HepG2 (cell line): ENCODE measurements at regions of chr15 and their contacts with region 1.

Region 1: DNA sequence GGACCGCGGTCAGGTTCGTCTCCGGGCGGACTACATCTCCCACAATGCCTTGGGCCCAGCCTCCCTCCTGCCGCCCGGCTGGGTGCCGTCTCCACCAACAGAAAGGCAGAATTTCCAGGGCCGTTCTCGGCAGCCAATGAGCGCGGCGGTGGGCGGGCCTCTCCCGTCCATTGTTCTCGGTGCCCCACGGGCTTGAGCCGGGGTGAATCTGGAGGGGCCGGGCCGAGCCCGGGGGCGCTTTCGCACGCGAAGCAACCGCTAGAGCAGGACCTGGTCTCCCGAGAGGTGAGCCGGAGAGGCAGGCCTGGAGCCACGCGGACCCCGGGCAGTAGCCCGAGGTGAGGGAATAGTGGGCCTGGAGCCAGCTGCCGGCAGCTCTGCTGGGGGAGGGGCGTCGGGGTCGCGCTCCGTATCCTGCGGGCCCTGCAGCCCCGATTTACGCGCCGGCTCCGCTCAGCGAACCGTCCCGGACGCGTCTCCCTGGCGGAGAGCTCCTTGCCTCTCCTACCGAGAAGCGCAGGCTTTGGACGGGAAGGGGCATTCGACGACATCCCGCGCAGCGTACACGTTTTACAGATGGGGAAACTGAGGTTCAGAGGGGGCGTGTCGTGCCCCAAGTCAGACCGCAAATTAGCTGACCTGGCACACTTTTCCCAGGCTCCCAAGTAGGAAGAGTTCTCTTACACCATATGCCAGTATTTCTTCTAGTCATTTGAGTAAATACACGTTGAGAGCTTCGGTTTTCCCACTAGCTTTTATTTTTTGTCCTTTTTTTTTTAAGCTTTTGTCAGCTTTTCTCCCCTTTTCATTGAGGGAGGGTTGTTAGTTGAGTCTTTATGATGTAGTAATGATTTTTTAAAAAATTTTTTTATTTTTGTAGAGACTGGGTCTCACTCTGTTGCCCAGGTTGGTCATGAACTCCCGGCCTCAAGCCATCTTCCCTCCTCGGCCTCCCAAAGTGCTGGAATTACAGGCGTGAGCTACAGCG is at the start of gene ZSCAN2:
- DNase-seq: peak; percentile 91
- ATAC-seq: peak; percentile 96
- H3K4me3 ChIP-seq: peak within 1 kb of the TSS; percentile 78 to 98 (median 86)
- H3K27ac ChIP-seq: peak within 1 kb of the TSS; percentile 86
- H3K4me1 ChIP-seq: peaks cover 60% of the 10 kb centered on the region
- H3K27me3 ChIP-seq: no peaks in the 10 kb centered on the region; a peak in 1 of 5 replicates
- CTCF ChIP-seq: peak; percentile 22; the same call in 1 of the 2 replicates
- EP300 ChIP-seq: no peak
- POLR2A ChIP-seq: peak; percentile 70 to 79
- RAD21 ChIP-seq: peak; percentile 48
- total RNA-seq, gene ZSCAN2: 21.5 and 23.7 TPM in 2 replicates

Region 2: DNA sequence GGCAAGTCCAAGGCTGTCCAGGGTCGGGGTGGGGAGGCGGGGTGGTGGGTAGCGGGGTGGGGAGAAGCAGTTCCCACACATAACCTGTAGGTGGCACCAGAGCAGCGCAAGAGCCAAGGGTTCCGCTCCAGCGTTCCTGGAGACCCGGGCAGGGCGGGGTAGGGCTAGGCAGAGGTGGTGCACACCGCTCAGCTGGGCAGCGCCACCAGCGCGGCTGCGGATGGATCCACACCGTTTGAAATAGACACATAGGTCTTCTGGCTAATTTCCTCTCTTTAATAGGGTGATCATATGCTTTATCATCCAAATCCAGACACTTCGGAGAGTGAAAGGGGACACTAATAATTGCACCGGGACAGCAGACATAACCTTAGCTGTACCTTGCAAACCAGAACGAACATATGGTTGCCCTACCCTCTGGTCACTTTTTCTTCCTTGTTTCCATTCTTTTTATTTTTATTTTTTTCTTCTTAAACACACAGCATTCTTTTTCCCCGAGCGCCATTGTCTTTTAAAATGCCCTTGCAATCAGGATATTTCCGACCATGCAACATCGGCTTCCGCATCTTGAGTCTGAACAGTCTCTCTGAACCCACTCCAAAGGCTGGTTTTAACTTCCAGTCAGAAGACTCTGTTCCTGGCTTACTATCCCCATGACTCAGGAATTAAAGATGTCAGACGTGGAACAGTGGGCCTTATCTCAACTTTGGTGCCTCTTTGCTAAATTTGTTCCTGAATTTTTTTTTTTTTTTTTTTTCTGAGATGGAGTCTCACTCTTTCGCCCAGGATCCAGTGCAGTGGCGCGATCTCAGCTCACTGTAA is 12.9 kb before region 1 on chr15:
- CTCF ChIA-PET with region 1: interaction called, 5 read pairs
- POLR2A ChIA-PET with region 1: interaction called, 9 read pairs
- in situ Hi-C with region 1: no loop called
- intact Hi-C with region 1: loop called (anchors 1 kb)
- DNase-seq: peak; percentile 83
- ATAC-seq: peak; percentile 100
- H3K4me3 ChIP-seq: peak overlapping the region; percentile 41 to 62 (median 50)
- H3K27ac ChIP-seq: no peak overlapping the region
- H3K4me1 ChIP-seq: peaks cover 27% of the 10 kb centered on the region
- H3K27me3 ChIP-seq: no peaks in the 10 kb centered on the region; a peak in 2 of 5 replicates
- CTCF ChIP-seq: peak; percentile 89
- EP300 ChIP-seq: no peak
- POLR2A ChIP-seq: no peak
- RAD21 ChIP-seq: peak; percentile 93

Region 3: GRCh38 chr15:84621358-84621979 is 20.3 kb after region 1 on chr15:
- CTCF ChIA-PET with region 1: no interaction called
- POLR2A ChIA-PET with region 1: interaction called, 32 read pairs
- in situ Hi-C with region 1: no loop called
- intact Hi-C with region 1: no loop called
- DNase-seq: no peak
- ATAC-seq: no peak
- H3K4me3 ChIP-seq: no peak overlapping the region
- H3K27ac ChIP-seq: no peak overlapping the region
- H3K4me1 ChIP-seq: peaks cover 22% of the 10 kb centered on the region
- H3K27me3 ChIP-seq: no peaks in the 10 kb centered on the region
- CTCF ChIP-seq: no peak
- EP300 ChIP-seq: no peak
- POLR2A ChIP-seq: no peak
- RAD21 ChIP-seq: no peak

Region 4: DNA sequence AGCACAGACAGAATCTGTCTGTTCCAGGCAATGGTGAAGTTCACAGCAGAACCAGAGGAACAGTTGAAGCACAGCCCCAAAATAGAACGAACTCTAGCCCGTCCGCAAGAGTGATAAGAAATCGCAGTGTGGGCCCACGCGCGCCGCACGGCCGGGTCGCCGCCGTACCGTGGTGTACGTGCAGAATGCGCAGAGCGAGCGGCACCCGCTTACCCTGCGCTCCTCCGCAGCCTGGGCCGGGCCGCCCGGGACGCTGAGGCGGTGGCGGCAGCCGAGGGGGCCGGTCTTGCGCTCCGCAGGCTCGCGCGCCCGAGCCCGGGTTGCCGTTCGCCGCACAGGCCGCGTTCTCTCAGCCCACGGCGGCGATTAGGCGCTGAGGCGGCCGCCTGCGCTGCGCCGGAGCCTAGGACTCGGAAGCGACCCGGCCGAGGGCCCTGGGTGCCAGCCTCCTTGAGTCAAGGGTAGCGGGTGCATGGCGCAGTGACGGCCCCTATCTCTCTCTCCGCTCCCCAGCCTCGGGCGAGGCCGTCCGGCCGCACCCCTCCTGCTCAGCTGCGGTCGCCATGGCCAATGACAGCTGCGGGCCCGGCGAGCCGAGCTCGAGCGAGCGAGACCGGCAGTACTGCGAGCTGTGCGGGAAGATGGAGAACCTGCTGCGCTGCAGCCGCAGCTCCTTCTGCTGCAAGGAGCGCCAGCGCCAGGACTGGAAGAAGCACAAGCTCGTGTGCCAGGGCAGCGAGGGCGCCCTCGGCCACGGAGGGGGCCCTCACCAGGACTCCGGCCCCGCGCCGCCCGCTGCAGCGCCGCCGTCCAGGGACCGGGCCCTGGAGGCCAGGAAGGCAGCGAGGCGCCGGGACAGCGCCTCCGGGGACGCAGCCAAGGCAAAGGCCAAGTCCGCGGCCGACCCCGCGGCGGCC is 32.4 kb after region 1 on chr15:
- CTCF ChIA-PET with region 1: interaction called, 25 read pairs
- POLR2A ChIA-PET with region 1: interaction called, 94 read pairs
- in situ Hi-C with region 1: loop called (anchors 5 kb)
- intact Hi-C with region 1: loop called (anchors 1 kb)
- DNase-seq: peak; percentile 18
- ATAC-seq: peak; percentile 80
- H3K4me3 ChIP-seq: peak overlapping the region; percentile 67 to 83 (median 68)
- H3K27ac ChIP-seq: no peak overlapping the region
- H3K4me1 ChIP-seq: peaks cover 42% of the 10 kb centered on the region
- H3K27me3 ChIP-seq: no peaks in the 10 kb centered on the region; a peak in 1 of 5 replicates
- CTCF ChIP-seq: no peak; the same call in 1 of the 2 replicates
- EP300 ChIP-seq: no peak
- POLR2A ChIP-seq: no peak
- RAD21 ChIP-seq: peak; percentile 40; the same call in 1 of the 2 replicates

Region 5: GRCh38 chr15:84716036-84716799 is 115.1 kb after region 1 on chr15 and contains the start of gene SEC11A:
- CTCF ChIA-PET with region 1: no interaction called
- POLR2A ChIA-PET with region 1: interaction called, 10 read pairs
- in situ Hi-C with region 1: no loop called
- intact Hi-C with region 1: no loop called
- DNase-seq: peak; percentile 90
- ATAC-seq: peak; percentile 98
- H3K4me3 ChIP-seq: peak within 1 kb of the TSS; percentile 72 to 89 (median 84)
- H3K27ac ChIP-seq: peak within 1 kb of the TSS; percentile 90
- H3K4me1 ChIP-seq: peaks cover 26% of the 10 kb centered on the region
- H3K27me3 ChIP-seq: no peaks in the 10 kb centered on the region; a peak in 1 of 5 replicates
- CTCF ChIP-seq: peak; percentile 23; the same call in 1 of the 2 replicates
- EP300 ChIP-seq: 0 out of 4 replicates have a peak, but pooled peaks of 1 of the 2 experiments have one; percentile 3
- POLR2A ChIP-seq: peak; percentile 79
- RAD21 ChIP-seq: peak; percentile 54; the same call in 1 of the 2 replicates
- total RNA-seq, gene SEC11A: 194 and 230 TPM in 2 replicates

Region 6: GRCh38 chr15:84748274-84749110 is 147.3 kb after region 1 on chr15 and contains the start of gene ZNF592:
- CTCF ChIA-PET with region 1: no interaction called
- POLR2A ChIA-PET with region 1: interaction called, 4 read pairs
- in situ Hi-C with region 1: no loop called
- intact Hi-C with region 1: loop called (anchors 5 kb)
- DNase-seq: peak; percentile 36
- ATAC-seq: peak; percentile 64
- H3K4me3 ChIP-seq: peak within 1 kb of the TSS; percentile 75 to 95 (median 84)
- H3K27ac ChIP-seq: peak within 1 kb of the TSS; percentile 98
- H3K4me1 ChIP-seq: peaks cover 53% of the 10 kb centered on the region
- H3K27me3 ChIP-seq: no peaks in the 10 kb centered on the region; a peak in 2 of 5 replicates
- CTCF ChIP-seq: no peak
- EP300 ChIP-seq: no peak
- POLR2A ChIP-seq: peak; percentile 23 to 41
- RAD21 ChIP-seq: peak; percentile 48; the same call in 1 of the 2 replicates
- total RNA-seq, gene ZNF592: 8.2 and 8.6 TPM in 2 replicates